ENCODE measurements at regions of chr7 and their contacts with region 1.

Region 1: DNA sequence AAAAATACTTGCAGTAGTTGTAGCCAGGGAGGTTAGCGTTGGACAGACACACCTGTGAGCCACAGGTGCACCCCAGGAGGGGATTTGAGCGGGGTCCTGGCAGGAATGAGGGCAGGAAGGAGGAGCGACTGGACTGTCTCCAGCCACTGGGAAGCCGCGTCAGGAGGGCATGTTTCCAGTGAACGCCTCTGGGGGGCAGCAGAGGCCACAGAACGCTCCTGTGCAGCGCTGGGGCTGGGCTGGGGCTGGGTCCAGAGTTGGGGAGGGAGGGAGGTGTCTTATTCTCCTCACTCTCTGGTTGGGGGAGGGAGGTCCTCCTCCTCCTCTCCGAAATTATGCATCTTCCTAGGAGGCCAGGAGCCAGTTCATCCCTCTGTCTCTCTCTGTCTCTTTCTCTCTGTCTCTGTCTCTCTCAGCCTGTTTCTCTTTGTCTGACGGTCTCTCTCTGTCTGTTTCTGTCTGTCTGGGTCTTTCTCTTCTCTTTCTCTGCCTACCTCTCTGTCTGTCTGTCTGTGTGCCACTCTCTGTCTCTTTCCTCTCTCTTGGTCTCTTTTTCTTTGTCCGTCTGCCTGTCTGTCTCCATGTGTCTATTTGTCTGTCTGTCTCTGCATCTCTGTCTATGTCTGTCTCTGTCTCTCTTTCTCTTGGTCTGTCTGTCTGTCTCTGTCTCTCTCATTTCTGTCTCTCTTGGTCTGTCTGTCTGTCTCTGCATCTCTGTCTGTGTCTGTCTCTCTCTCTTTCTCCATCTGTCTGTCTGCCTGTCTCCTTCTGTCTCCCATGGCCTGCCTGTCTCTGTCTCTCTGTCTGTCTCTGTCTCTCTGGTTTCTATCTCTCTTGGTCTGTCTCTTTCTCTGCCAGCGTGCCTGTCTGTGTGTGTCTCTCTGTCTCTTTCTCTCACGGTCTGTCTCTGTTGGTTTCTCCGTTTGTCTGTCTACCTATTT is 9.9 kb upstream of the PSMG3 start:
- DNase-seq: peak; percentile 76
- H3K4me3 ChIP-seq: no peak overlapping the region
- H3K27ac ChIP-seq: no peak overlapping the region
- H3K4me1 ChIP-seq: peaks cover 0 to 8% (median 2%) of the 10 kb centered on the region in 4 donors
- H3K27me3 ChIP-seq: no peaks in the 10 kb centered on the region
- CTCF ChIP-seq: peak; percentile 68 to 83 (median 80)
- EP300 ChIP-seq: no peak
- POLR2A ChIP-seq: no peak

Region 2: DNA sequence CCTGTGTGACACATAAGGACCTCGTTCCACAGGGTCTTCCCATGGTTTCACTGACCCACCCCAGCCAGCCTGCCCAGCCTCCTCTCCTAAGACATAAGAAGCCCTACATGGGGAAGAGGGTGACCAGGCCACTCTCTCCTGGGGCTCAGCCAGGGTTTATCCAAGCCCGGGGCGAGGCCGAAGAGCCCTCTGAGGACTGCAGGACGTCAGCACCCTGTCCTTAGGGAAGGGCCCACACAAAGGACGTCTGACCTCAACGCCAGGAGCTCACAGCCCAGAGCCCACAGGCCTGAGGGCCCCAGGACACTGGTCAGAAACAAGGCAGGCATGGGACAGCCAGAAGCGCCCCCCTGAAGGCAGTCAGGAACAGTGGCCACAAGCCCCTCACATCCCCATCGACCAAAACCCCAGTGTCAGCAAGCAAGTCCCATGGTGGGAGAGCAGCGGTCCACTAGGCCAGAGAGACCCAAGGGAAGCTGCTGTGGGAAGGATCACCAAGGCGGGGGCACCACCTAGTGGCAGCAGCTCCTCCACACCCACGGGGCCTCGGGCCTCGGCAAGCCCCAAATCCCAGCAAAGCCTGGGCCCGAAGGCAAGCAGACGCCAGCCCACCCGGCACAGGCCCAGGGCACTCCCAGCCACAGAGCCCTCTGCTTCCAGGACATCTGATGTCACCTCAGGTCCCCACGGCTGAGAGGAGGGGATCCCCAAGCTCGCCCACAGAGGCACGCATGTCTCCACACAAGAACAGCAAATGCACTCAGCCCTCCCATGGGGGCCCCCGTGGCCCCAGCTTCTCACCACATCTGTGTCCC is 629.6 kb after region 1 on chr7:
- in situ Hi-C with region 1: loop called in 1 of 4 experiments (anchors 25 kb)
- intact Hi-C with region 1: no loop called
- DNase-seq: peak; percentile 59
- H3K4me3 ChIP-seq: no peak overlapping the region
- H3K27ac ChIP-seq: no peak overlapping the region
- H3K4me1 ChIP-seq: peaks cover 0 to 4% (median 0%) of the 10 kb centered on the region in 4 donors
- H3K27me3 ChIP-seq: no peaks in the 10 kb centered on the region
- CTCF ChIP-seq: peak; percentile 59 to 72 (median 67)
- EP300 ChIP-seq: no peak
- POLR2A ChIP-seq: no peak

Region 3: GRCh38 chr7:2325162-2325561 is 745.4 kb after region 1 on chr7:
- in situ Hi-C with region 1: loop called in 2 of 4 experiments (anchors 25 kb)
- intact Hi-C with region 1: no loop called
- DNase-seq: no peak
- H3K4me3 ChIP-seq: no peak overlapping the region
- H3K27ac ChIP-seq: peak overlapping the region in 2 of 4 donors; percentile 5 to 19
- H3K4me1 ChIP-seq: no peaks in the 10 kb centered on the region
- H3K27me3 ChIP-seq: no peaks in the 10 kb centered on the region
- CTCF ChIP-seq: no peak
- EP300 ChIP-seq: no peak
- POLR2A ChIP-seq: no peak

Region 4: DNA sequence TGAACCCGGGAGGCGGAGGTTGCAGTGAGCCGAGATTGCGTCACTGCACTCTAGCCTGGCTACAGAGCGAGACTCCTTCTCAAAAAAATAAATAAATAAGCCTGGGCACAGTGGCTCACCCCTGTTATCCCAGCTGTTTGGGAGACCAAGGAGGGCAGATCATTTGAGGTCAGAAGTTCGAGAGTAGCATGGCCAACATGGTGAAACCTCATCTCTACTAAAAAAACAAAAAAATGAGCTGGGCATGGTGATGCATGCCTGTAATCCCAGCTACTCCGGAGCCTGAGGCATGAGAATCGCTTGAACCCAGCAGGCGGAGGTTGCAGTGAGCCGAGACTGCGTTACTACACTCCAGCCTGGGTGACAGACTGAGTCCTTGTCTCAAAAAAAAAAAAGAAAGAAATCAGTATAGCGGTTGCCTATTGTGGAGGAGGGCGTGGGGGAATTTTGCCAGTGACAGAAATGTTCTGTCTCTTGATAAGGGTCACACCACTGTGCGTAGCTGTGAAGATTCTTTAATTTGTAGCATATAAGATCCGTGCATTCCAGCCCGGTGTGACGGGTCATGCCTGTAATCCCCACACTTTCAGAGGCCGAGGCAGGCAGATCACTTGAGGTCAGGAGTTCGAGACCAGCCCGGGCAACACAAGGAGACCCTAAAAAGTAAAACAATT is 757.0 kb after region 1 on chr7:
- in situ Hi-C with region 1: loop called in 3 of 4 experiments (anchors 5 to 25 kb)
- intact Hi-C with region 1: loop called (anchors 10 kb)
- DNase-seq: no peak
- H3K4me3 ChIP-seq: no peak overlapping the region
- H3K27ac ChIP-seq: no peak overlapping the region
- H3K4me1 ChIP-seq: no peaks in the 10 kb centered on the region
- H3K27me3 ChIP-seq: no peaks in the 10 kb centered on the region
- CTCF ChIP-seq: no peak
- EP300 ChIP-seq: no peak
- POLR2A ChIP-seq: no peak

Region 5: DNA sequence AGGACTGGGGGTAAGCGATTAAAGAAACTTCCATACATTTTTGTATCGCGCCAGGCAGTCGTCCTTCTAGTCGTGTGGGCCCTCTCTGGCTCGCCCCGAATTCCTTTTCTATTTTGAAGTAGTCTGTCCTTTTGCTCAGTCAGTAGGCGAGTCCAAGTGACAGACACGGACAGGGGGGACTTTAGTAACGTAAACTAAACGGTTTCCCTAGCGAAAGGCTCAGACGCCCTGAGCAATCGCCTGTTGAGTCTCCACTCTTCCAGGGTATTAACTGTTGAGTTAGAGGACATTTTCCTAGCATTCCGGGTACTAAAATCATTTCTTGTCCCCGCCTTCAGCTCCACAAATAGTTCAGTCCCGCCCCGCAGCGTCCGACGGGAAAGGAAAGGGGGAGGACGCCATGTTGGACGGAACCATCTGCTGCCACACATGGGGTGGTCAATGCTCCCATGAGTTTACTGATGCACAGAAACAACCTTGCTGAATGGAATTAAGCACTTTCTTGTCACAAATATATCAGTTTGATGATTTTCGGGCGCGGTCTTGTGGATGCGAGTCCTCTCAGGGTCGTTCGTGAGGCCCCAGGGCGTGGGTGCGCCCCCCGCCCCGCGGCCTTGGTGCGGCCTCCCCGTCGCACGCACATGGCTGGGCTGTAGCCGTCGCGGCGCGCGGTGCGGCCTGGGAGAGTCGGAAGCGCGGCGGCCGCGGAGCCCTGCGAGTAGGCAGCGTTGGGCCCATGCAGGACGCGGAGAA is 774.6 kb after region 1 on chr7 and contains the start of gene EIF3B:
- in situ Hi-C with region 1: loop called in 2 of 4 experiments (anchors 25 kb)
- intact Hi-C with region 1: loop called (anchors 10 kb)
- DNase-seq: peak; percentile 91
- H3K4me3 ChIP-seq: peak within 1 kb of the TSS; percentile 87 to 100 (median 98)
- H3K27ac ChIP-seq: peak within 1 kb of the TSS; percentile 96 to 98 (median 96)
- H3K4me1 ChIP-seq: peaks cover 19 to 44% (median 32%) of the 10 kb centered on the region in 4 donors
- H3K27me3 ChIP-seq: no peaks in the 10 kb centered on the region
- CTCF ChIP-seq: peak in 2 of 5 experiments; percentile 5 to 15
- EP300 ChIP-seq: no peak
- POLR2A ChIP-seq: peak; percentile 28
- total RNA-seq, gene EIF3B: 75.4 to 201 (median 90.6) TPM

Measured in transverse colon (tissue), 4 donors.